Activated CD4-positive, alpha-beta T cell treated with anti-CD3 and anti-CD28 coated beads, Interleukin-2, amount 10 ng/mL, durations not matched to agents 24 days and 14 days (primary cell): ENCODE measurements at regions of chr12 and their contacts with region 1.

Region 1: DNA sequence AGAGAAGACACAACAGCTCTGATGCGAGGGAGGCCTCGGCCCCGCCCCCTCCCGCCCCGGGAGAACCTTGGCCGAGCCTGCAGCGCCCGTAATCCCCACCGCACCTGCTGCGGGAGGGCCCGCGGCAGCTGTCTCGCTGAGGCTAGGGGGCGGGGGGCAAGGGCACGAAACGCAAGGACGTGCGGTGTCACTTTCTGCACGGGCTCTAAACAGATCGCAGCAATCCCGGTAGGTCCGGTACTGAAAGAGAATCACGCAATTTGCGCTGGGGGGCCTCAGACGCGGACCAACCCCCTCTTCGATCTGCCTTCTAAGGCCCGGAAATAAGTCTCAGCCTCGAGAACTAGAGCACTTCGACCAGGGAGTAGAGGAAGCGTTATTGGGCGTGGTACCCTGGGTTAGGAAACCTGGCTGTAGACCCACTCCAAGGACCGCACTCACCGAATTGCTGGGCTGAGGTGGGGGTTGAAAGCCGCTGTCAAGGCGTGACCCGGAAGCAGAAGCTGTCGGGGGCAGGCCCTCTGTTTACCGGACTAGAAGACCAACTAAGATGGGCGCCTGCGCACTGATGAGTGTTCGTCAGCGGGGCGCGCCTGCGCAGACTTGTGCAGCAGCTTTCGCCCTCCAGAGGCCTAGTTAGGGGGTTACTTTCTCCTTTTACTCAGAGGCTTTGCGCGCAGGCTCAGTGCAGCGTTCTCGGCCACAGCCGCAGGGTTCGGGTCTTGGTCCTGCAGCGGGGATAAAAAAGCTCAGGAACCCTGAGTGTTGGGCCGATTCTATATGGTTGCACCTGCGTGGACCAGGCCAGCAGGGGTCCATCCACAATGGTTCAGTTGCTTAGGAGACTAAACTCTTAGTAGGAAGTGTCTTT is at the start of gene ASB8:
- DNase-seq: peak; percentile 100
- H3K4me3 Mint-ChIP-seq: peak within 1 kb of the TSS; percentile 98
- H3K27ac Mint-ChIP-seq: peak within 1 kb of the TSS; percentile 96
- H3K4me1 Mint-ChIP-seq: peaks cover 24% of the 10 kb centered on the region
- H3K27me3 Mint-ChIP-seq: peaks cover 6% of the 10 kb centered on the region
- total RNA-seq, gene ASB8: 30.0 and 35.8 TPM in 2 replicates

Region 2: GRCh38 chr12:47963340-47964040 is 193.8 kb before region 1 on chr12 and contains the start of gene TMEM106C:
- intact Hi-C with region 1: loop called (anchors 5 kb)
- DNase-seq: peak; percentile 98
- H3K4me3 Mint-ChIP-seq: peak within 1 kb of the TSS; percentile 100
- H3K27ac Mint-ChIP-seq: peak within 1 kb of the TSS; percentile 90
- H3K4me1 Mint-ChIP-seq: peaks cover 33% of the 10 kb centered on the region
- H3K27me3 Mint-ChIP-seq: peaks cover 29% of the 10 kb centered on the region
- total RNA-seq, gene TMEM106C: 155 and 162 TPM in 2 replicates

Region 3: GRCh38 chr12:48119078-48119833 is 38.0 kb before region 1 on chr12 and contains the start of gene PFKM:
- intact Hi-C with region 1: loop called (anchors 1 kb)
- DNase-seq: peak; percentile 92
- H3K4me3 Mint-ChIP-seq: peak within 1 kb of the TSS; percentile 98
- H3K27ac Mint-ChIP-seq: peak within 1 kb of the TSS; percentile 91
- H3K4me1 Mint-ChIP-seq: peaks cover 18% of the 10 kb centered on the region
- H3K27me3 Mint-ChIP-seq: peaks cover 25% of the 10 kb centered on the region
- total RNA-seq, gene PFKM: 87.3 and 93.2 TPM in 2 replicates

Region 4: GRCh38 chr12:48197971-48198671 is 40.9 kb after region 1 on chr12:
- intact Hi-C with region 1: loop called (anchors 1 kb)
- DNase-seq: peak; percentile 97
- H3K4me3 Mint-ChIP-seq: peak overlapping the region; percentile 88
- H3K27ac Mint-ChIP-seq: peak overlapping the region; percentile 97
- H3K4me1 Mint-ChIP-seq: peaks cover 29% of the 10 kb centered on the region
- H3K27me3 Mint-ChIP-seq: peaks cover 19% of the 10 kb centered on the region

Region 5: DNA sequence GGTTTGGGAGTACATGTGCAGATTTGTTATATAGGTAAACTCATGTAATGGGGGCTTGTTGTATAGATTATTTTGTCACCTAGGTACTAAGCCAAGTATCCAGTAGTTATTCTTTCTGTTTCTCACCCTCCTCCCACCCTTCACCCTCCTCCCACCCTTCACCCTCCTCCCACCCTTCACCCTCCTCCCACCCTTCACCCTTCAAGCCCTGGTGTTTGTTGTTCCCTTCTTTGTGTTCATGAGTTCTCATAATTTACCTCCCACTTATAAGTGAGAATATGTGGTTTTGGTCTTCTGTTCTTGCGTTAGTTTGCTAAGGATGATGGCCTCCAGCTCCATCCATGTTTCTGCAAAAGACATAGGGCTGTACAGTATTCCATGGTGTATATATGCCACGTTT is 104.5 kb after region 1 on chr12:
- intact Hi-C with region 1: no loop called
- DNase-seq: no peak
- H3K4me3 Mint-ChIP-seq: no peak overlapping the region
- H3K27ac Mint-ChIP-seq: no peak overlapping the region
- H3K4me1 Mint-ChIP-seq: peaks cover 2% of the 10 kb centered on the region
- H3K27me3 Mint-ChIP-seq: peaks cover 22% of the 10 kb centered on the region